Activated CD4-positive, alpha-beta T cell treated with anti-CD3 and anti-CD28 coated beads for 36 hours (primary cell): ENCODE measurements at regions of chr6 and their contacts with region 1.

Region 1: GRCh38 chr6:52049252-52050050 is 38.0 kb downstream of the PKHD1 start:
- DNase-seq: peak; percentile 11
- ATAC-seq: no peak
- H3K4me3 Mint-ChIP-seq: no peak overlapping the region
- H3K27ac Mint-ChIP-seq: no peak overlapping the region
- H3K4me1 Mint-ChIP-seq: no peaks in the 10 kb centered on the region
- H3K27me3 Mint-ChIP-seq: peaks cover 14% of the 10 kb centered on the region

Region 2: DNA sequence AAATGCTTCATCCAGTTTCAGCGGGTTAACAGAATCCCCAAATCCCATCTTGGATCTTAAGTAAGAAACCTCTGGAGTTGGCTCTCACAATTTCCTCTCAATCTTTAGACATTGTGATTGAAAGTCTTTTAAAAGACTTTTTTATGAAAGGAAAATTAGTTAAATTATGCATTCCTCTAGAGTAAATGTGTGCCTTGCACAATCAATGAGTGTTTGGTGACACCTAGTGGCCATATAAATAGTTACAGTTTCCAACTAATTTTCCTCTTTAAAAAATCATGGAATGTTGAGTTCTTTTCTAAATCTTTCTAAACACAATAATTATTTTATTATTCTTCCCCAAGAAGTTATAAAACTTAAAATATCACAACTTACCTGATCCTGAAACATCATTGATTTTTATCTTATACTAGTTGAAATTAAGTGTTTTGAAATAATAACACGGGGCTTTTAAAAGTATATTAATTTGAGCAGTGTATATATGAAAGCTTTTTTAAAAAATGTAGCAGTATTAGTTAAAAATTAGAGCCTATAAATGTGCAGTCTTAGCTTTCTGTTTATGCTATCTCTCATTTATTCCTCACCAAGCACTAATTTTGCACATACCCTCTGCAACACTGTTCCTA is 28.4 kb before region 1 on chr6:
- CTCF ChIA-PET with region 1: interaction called, 17 read pairs
- POLR2A ChIA-PET with region 1: no interaction called
- intact Hi-C with region 1: loop called in 1 of 2 experiments (anchors 2 kb)
- DNase-seq: no peak
- ATAC-seq: no peak
- H3K4me3 Mint-ChIP-seq: no peak overlapping the region
- H3K27ac Mint-ChIP-seq: no peak overlapping the region
- H3K4me1 Mint-ChIP-seq: no peaks in the 10 kb centered on the region
- H3K27me3 Mint-ChIP-seq: peaks cover 8% of the 10 kb centered on the region

Region 3: GRCh38 chr6:52063584-52064344 is 14.3 kb after region 1 on chr6:
- CTCF ChIA-PET with region 1: interaction called, 17 read pairs
- POLR2A ChIA-PET with region 1: no interaction called
- intact Hi-C with region 1: no loop called
- DNase-seq: peak; percentile 79
- ATAC-seq: peak; percentile 99
- H3K4me3 Mint-ChIP-seq: no peak overlapping the region
- H3K27ac Mint-ChIP-seq: peak overlapping the region; percentile 77
- H3K4me1 Mint-ChIP-seq: peaks cover 12% of the 10 kb centered on the region
- H3K27me3 Mint-ChIP-seq: peaks cover 3% of the 10 kb centered on the region

Region 4: DNA sequence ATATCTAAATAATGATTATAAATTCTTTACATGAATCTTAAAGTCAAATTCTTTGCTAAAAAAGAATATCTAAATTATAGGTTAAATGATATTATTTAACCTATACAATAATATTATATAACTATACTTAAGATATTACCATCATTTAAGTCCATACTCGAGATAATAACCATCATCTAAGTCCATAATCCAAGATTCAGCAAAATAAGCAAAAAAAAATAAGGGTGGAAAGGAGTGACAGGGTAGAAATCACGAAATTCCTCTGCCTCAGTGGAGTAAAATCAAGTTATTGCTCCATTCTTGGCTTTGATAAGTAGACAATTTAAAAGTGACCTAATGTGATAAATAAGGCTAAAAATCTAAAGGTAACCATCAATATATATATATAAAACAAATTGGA is 146.4 kb after region 1 on chr6:
- CTCF ChIA-PET with region 1: no interaction called
- POLR2A ChIA-PET with region 1: no interaction called
- intact Hi-C with region 1: no loop called
- DNase-seq: no peak
- ATAC-seq: no peak
- H3K4me3 Mint-ChIP-seq: no peak overlapping the region
- H3K27ac Mint-ChIP-seq: no peak overlapping the region
- H3K4me1 Mint-ChIP-seq: peaks cover 6% of the 10 kb centered on the region
- H3K27me3 Mint-ChIP-seq: peaks cover 18% of the 10 kb centered on the region